Activated CD8-positive, alpha-beta T cell treated with anti-CD3 and anti-CD28 coated beads for 36 hours (primary cell): ENCODE measurements at regions of chr6 and their contacts with region 1.

Region 1: DNA sequence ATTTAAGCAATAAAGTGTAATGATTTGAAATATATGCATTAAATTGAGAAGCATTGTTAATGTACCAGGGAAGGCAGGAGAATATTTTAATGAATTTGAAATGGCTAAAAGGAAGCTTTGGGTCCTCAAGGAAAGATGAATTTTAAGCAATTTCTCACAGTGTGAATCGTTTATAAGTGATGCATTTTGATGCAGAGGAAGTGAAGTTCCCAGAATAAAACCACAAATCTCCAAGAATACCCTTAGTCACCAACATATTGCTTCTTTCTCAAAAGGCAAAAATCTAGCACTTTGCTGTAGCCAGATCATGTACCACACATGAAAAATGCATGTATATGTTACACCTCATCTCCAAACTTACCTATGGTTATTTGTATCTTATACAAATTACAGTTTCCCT is 11.7 kb downstream of the TPD52L1 start:
- DNase-seq: no peak
- ATAC-seq: no peak
- H3K4me3 Mint-ChIP-seq: no peak overlapping the region
- H3K27ac Mint-ChIP-seq: no peak overlapping the region
- H3K4me1 Mint-ChIP-seq: no peaks in the 10 kb centered on the region
- H3K27me3 Mint-ChIP-seq: peaks cover 14% of the 10 kb centered on the region
- CTCF ChIP-seq: no peak

Region 2: DNA sequence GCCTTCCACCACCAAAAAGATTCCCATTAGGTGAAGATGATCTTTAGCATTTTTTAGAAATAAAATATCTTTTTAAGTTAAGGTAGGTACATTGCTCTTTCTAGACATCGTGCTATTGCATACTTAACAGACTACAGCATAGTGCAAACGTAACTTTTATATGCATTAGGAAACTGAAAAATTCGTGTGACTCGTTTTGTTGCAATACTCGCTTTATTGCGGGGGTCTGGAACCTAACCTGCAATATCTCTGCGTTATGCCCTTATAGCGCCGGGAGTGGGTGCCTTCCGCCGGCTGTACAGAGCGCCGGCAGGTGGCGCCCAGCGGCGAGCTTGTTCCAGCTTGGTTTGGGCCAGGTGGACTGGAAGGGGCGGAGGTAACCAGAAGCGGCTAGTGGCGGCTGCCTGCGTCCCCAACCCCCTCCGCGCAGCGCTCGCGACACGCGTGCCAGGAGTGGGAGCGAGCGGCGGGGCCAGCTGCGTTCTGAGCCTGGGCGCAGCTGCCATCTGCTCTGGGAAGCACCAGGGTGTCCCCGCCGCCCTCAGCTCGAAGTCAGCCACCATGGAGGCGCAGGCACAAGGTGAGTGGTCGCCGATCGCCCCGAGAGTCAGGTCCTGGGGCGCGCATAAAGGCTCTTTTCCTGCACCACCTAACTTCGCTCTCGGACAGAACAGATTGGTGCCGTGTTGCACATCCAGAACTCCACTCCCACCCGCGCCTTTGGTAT is 11.7 kb before region 1 on chr6 and contains the start of gene TPD52L1:
- CTCF ChIA-PET with region 1: interaction called, 14 read pairs
- POLR2A ChIA-PET with region 1: no interaction called
- intact Hi-C with region 1: no loop called
- DNase-seq: peak; percentile 72
- ATAC-seq: peak; percentile 94
- H3K4me3 Mint-ChIP-seq: peak within 1 kb of the TSS; percentile 65
- H3K27ac Mint-ChIP-seq: no peak within 1 kb of the TSS
- H3K4me1 Mint-ChIP-seq: no peaks in the 10 kb centered on the region
- H3K27me3 Mint-ChIP-seq: peaks cover 38% of the 10 kb centered on the region
- CTCF ChIP-seq: peak; percentile 79
- total RNA-seq, gene TPD52L1: 0.52 to 1.1 TPM